Left lung (tissue), 14 donors: ENCODE measurements at regions of chr17 and their contacts with region 1.

Region 1: GRCh38 chr17:8563981-8564602 is 66.4 kb downstream of the MYH10 start:
- DNase-seq: no peak
- ATAC-seq: no peak
- H3K4me3 ChIP-seq: no peak overlapping the region
- H3K27ac ChIP-seq: no peak overlapping the region
- H3K4me1 ChIP-seq: no peaks in the 10 kb centered on the region
- H3K27me3 ChIP-seq: no peaks in the 10 kb centered on the region
- CTCF ChIP-seq: no peak

Region 2: GRCh38 chr17:8337802-8338752 is 226.0 kb before region 1 on chr17:
- intact Hi-C with region 1: no loop called
- DNase-seq: no peak
- ATAC-seq: no peak
- H3K4me3 ChIP-seq: no peak overlapping the region
- H3K27ac ChIP-seq: no peak overlapping the region
- H3K4me1 ChIP-seq: peaks cover 0 to 6% of the 10 kb centered on the region in 2 donors
- H3K27me3 ChIP-seq: no peaks in the 10 kb centered on the region
- CTCF ChIP-seq: no peak

Region 3: GRCh38 chr17:8745586-8746500 is 181.8 kb after region 1 on chr17:
- intact Hi-C with region 1: loop called in 1 of 2 experiments (anchors 10 kb)
- DNase-seq: peak; percentile 73 to 94 (median 80)
- ATAC-seq: peak; percentile 88
- H3K4me3 ChIP-seq: peak overlapping the region; percentile 50 to 66
- H3K27ac ChIP-seq: peak overlapping the region; percentile 17 to 78
- H3K4me1 ChIP-seq: peaks cover 3 to 18% of the 10 kb centered on the region in 2 donors
- H3K27me3 ChIP-seq: peaks cover 0 to 11% of the 10 kb centered on the region in 2 donors
- CTCF ChIP-seq: peak; percentile 95 to 96